Activated CD4-positive, alpha-beta T cell treated with anti-CD3 and anti-CD28 coated beads for 36 hours (primary cell): ENCODE measurements at regions of chr17 and their contacts with region 1.

Region 1: DNA sequence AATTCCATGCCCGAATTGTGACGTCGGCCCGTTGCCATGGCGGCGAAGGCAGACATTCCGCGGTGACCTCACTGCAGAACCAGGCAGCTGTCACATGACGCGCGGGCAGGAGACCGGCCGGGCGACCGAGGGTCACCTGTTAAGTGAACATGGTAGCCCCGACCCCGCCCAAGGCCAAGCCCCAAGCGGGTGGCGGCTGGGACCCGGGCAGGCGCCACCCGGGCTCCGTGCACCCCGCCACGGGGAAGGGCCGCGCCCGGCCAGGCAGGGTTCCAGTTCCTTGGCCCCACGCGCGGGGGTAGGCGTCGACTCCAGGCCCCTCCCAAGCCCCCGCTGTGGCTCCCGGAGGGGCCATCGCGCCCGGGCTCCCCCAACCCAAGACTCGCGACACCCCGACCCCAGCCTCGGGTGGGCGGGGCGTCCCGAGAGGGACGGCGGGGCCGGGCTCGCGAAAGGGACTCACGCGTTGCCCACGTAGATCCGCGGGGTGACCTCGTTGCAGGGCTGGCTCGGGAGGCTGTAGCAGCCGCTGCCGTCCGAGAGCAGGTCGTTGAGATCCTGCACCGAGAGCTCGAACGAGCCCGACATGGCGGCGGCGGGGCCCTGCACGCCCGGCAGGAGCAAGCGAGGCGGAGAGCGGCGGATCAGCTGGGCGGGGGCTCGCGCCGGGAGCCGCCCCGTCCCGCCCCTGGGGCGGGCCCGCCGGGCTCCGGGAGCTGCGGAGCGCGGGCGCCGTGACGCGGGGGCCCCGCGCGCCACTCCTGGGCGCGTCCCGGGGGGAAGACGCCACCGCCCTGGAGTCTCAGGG is at the start of gene DUSP3:
- DNase-seq: peak; percentile 85
- ATAC-seq: peak; percentile 98
- H3K4me3 Mint-ChIP-seq: peak within 1 kb of the TSS; percentile 78
- H3K27ac Mint-ChIP-seq: peak within 1 kb of the TSS; percentile 70
- H3K4me1 Mint-ChIP-seq: peaks cover 7% of the 10 kb centered on the region
- H3K27me3 Mint-ChIP-seq: peaks cover 19% of the 10 kb centered on the region
- total RNA-seq, gene DUSP3: 23.4 to 24.8 TPM

Region 2: DNA sequence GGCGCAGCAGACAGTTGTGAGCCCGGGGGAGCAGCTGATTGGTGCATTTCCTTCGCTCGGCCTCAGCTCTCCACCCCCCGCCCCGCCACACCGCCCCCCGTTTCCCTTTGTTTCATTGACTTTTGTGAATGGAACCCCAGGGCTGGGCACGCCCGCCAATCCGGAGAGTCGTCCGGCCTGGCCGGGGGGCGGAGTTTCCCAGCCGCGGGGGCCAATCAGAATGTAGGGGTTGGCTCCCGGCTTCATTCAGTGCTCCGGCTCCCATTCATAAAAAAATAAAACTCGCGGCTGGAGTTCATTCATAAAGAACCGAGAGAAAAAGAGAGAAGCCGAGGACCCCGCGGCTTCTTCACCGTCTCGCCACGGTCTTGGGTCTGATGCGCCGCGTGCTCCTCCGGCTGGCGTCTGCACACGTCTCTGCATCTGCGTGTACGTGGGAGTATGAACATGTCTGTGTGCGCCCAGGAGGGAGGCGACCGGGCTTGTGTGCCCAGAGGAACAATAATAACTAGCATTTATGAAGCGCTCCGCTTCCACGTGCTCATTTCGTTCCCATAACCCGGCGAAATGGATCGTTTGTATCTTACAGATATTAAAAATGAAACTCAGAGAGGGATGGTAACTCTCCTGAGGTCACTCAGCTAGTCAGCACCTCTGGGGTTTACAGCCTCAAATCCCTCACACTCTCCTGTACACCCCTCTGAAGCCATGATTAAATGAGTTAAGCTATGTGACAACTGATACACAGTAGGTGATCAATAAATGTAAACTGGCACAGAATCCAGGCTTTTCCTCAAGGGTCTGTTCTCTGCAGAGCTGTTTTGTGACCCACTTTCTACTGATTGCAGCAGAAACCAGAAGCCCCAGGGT is 232.0 kb before region 1 on chr17 and contains the start of gene ETV4:
- CTCF ChIA-PET with region 1: no interaction called
- POLR2A ChIA-PET with region 1: no interaction called
- intact Hi-C with region 1: loop called in 1 of 2 experiments (anchors 1 kb)
- DNase-seq: peak; percentile 96
- ATAC-seq: peak; percentile 94
- H3K4me3 Mint-ChIP-seq: peak within 1 kb of the TSS; percentile 75
- H3K27ac Mint-ChIP-seq: peak within 1 kb of the TSS; percentile 16
- H3K4me1 Mint-ChIP-seq: peaks cover 17% of the 10 kb centered on the region
- H3K27me3 Mint-ChIP-seq: peaks cover 49% of the 10 kb centered on the region
- total RNA-seq, gene ETV4: 2.9 to 3.3 TPM

Region 3: DNA sequence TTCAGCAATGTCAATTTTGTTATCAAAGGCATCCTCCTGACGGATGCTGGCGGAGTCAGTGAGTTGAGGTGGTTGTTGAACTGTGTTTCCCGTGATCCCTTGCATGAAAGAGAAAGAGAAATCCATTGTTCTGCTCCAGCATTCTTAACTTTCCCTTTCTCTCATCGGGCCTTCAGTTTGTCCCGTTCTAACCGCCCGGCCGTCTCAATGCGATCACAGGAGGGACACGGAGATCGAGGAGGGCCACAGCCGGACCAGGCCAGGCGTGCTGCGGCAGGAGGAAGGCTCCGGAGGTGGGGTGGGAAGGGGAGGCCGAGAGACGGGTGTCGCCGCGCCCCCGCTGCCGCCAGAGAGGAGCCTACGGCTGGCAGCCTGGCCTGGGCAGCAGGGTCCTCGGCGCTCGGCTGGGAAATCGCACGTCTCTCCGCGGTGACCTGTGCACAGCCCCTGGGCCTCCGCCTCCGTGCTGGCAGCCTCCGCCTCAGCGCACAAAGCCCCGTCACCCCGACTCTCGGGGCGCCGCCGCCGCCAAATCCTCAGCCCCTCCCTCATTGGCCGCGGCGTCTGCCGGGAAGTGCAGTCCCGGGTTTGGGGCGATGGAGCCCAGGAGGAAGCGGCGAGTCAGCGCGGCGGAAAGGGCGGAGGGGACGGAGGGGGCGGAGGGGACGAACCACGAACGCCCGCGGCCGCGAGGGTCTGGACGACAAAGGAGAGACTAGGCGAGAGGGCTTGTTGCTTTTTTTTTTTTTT is 58.1 kb before region 1 on chr17:
- CTCF ChIA-PET with region 1: no interaction called
- POLR2A ChIA-PET with region 1: no interaction called
- intact Hi-C with region 1: loop called in 1 of 2 experiments (anchors 1 kb)
- DNase-seq: peak; percentile 88
- ATAC-seq: peak; percentile 91
- H3K4me3 Mint-ChIP-seq: peak overlapping the region; percentile 78
- H3K27ac Mint-ChIP-seq: peak overlapping the region; percentile 97
- H3K4me1 Mint-ChIP-seq: peaks cover 12% of the 10 kb centered on the region
- H3K27me3 Mint-ChIP-seq: peaks cover 2% of the 10 kb centered on the region

Region 4: GRCh38 chr17:43832976-43833829 is 54.7 kb after region 1 on chr17 and contains the start of gene MPP3:
- CTCF ChIA-PET with region 1: interaction called, 3 read pairs
- POLR2A ChIA-PET with region 1: no interaction called
- intact Hi-C with region 1: loop called (anchors 2 to 5 kb)
- DNase-seq: peak; percentile 63
- ATAC-seq: peak; percentile 74
- H3K4me3 Mint-ChIP-seq: peak within 1 kb of the TSS; percentile 66
- H3K27ac Mint-ChIP-seq: no peak within 1 kb of the TSS
- H3K4me1 Mint-ChIP-seq: peaks cover 17% of the 10 kb centered on the region
- H3K27me3 Mint-ChIP-seq: peaks cover 34% of the 10 kb centered on the region
- total RNA-seq, gene MPP3: 0.37 to 0.41 TPM

Region 5: GRCh38 chr17:44006598-44007345 is 228.2 kb after region 1 on chr17:
- CTCF ChIA-PET with region 1: no interaction called
- POLR2A ChIA-PET with region 1: no interaction called
- intact Hi-C with region 1: loop called in 1 of 2 experiments (anchors 1 kb)
- DNase-seq: peak; percentile 99
- ATAC-seq: peak; percentile 84
- H3K4me3 Mint-ChIP-seq: peak overlapping the region; percentile 78
- H3K27ac Mint-ChIP-seq: peak overlapping the region; percentile 86
- H3K4me1 Mint-ChIP-seq: peaks cover 20% of the 10 kb centered on the region
- H3K27me3 Mint-ChIP-seq: peaks cover 17% of the 10 kb centered on the region

Region 6: GRCh38 chr17:45051060-45051719 is 1272.6 kb after region 1 on chr17 and contains the start of gene DCAKD:
- CTCF ChIA-PET with region 1: no interaction called
- POLR2A ChIA-PET with region 1: no interaction called
- intact Hi-C with region 1: loop called in 1 of 2 experiments (anchors 5 kb)
- DNase-seq: peak; percentile 96
- ATAC-seq: peak; percentile 97
- H3K4me3 Mint-ChIP-seq: peak within 1 kb of the TSS; percentile 87
- H3K27ac Mint-ChIP-seq: peak within 1 kb of the TSS; percentile 95
- H3K4me1 Mint-ChIP-seq: peaks cover 50% of the 10 kb centered on the region
- H3K27me3 Mint-ChIP-seq: no peaks in the 10 kb centered on the region
- total RNA-seq, gene DCAKD: 34.8 to 36.2 TPM